Motor neuron (in vitro differentiated cells): ENCODE measurements at regions of chr3 and their contacts with region 1.

Region 1: DNA sequence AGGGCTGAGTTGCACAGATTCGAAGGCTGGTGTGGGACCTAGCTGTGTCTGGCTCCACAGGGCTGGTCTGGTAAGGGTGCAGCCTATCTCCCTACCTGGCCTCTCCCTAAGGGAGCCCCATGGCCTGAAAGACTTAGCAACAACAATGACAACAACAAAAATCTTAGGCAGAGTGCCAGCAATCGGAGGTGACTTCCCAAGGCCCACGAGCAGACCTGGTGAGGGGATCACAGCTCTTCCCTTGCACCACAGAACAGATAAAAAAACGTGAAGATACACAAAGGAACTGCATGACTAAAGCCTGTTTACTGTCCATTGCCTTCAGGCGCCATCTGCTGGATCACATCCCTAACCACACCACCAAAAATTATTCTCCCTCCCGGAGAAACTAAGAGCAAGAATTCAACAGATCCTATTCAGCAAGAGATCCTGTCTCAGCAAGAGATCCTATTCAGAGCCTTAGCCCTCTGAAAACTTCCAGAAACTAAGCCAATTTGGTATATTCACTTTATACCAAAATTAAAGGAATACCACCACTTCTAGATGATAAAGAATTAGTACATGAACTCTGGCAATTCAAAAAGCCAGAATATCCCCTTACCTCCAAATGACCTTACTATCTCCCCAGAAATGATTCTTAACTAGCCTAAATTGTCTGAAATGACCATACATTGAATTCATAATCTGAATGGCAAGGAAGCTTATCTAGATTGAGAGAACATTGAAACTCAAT is 24.1 kb upstream of the OR5K4 start:
- ATAC-seq: peak; percentile 58 to 87 (median 71)
- H3K4me3 ChIP-seq: no peak overlapping the region
- H3K27ac ChIP-seq: no peak overlapping the region
- H3K4me1 ChIP-seq: no peaks in the 10 kb centered on the region

Region 2: DNA sequence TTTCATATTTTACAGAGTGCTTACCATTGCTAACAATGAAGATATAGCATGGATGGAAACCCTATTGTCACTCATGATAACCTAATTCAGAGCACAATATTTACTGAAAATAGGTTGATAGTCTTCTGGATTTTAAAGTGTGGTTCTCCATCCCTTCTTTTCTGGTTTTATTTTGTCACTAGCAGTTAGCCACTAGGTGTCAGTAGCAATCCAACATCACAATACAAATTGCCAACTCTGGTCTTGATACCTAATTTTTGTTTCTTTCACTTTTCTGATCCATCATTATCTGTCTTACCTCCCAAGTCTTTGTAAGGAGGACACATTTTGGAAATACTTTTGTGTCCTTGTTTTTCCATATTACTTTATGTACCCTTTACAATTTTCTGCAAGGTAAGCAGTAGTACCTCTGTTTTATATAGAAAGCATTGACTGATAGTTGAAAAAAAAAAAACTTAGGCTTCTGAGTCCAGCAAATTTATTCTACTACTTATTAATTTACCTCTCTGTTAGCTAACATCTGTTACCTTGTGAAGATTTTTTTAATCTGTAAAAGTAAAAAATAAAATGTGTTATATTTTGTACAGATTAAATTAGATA is 536.0 kb before region 1 on chr3:
- in situ Hi-C with region 1: loop called in 1 of 9 experiments (anchors 25 kb)
- ATAC-seq: peak in 2 of 8 experiments; percentile 37 to 43
- H3K4me3 ChIP-seq: no peak overlapping the region
- H3K27ac ChIP-seq: no peak overlapping the region
- H3K4me1 ChIP-seq: no peaks in the 10 kb centered on the region

Region 3: GRCh38 chr3:98209244-98209643 is 120.3 kb before region 1 on chr3:
- in situ Hi-C with region 1: loop called in 1 of 9 experiments (anchors 10 kb)
- ATAC-seq: no peak
- H3K4me3 ChIP-seq: no peak overlapping the region
- H3K27ac ChIP-seq: no peak overlapping the region
- H3K4me1 ChIP-seq: no peaks in the 10 kb centered on the region

Region 4: DNA sequence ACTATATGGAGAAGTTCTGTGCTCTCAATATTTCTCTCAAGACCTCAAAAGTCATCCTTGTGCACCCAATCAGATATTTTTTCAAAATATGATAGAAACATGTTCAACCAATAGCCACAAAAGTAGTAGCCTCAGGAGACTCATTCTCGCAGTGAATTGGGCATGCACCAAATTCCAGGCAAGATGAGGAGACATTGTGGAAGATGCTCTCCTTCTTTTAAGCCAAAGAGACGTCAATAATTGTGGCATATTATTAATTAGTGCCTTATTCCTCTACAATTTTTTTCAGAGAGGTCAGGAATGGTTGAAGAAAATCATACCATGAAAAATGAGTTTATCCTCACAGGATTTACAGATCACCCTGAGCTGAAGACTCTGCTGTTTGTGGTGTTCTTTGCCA is 167.8 kb after region 1 on chr3 and contains the start of gene OR5K2:
- in situ Hi-C with region 1: no loop called
- ATAC-seq: no peak
- H3K4me3 ChIP-seq: no peak within 1 kb of the TSS
- H3K27ac ChIP-seq: no peak within 1 kb of the TSS
- H3K4me1 ChIP-seq: no peaks in the 10 kb centered on the region
- total RNA-seq, gene OR5K2: 0.28 to 0.43 TPM in 2 of 8 experiments, not detected in the others